ENCODE measurements at regions of chr5 and their contacts with region 1.

Region 1: DNA sequence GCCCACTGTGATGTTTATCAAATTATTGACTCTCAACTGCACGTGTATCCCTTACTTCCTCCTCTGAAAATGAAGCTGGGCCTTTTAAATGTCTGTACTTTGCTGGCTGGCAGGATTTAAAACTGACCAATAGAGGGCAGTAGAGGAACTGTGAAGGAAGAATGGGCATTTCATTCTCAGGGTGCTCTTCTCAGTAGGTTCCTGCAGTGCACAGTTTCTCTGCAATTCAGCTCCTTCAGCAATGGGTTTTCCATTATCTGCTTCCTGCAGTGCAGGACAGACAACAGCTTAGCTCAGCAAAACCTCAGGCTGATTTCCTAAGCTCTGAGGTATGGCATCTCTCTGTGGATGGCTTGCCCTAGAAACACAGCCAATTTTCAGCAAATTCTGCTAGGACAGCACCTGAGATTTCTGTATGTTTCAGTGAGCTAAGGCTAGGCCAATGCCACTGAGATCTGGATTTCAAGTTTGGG is 298.4 kb upstream of the PRDM9 start:
- DNase-seq: peak; percentile 39
- ATAC-seq: peak; percentile 81
- H3K4me3 ChIP-seq: no peak overlapping the region
- H3K27ac ChIP-seq: no peak overlapping the region
- H3K4me1 ChIP-seq: no peaks in the 10 kb centered on the region
- H3K27me3 ChIP-seq: no peaks in the 10 kb centered on the region
- CTCF ChIP-seq: peak; percentile 71
- EP300 ChIP-seq: no peak
- POLR2A ChIP-seq: no peak
- RAD21 ChIP-seq: no peak

Region 2: DNA sequence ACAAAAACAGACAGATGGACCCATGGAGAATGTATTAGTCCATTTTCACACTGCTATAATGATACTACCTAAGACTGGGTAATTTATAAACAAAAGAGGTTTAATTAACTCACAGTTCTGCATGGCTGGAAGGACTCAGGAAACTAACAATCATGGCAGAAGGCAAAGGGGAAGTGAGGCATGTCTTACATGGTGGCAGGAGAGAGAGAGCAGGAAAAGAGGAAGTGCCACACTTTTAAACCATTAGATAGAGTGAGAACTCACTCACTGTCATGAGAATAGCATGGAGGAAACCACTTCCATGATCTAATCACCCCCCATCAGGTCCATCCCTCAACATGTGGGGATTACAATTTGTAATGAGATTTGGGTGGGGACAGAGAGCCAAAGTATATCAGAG is 1164.8 kb before region 1 on chr5:
- CTCF ChIA-PET with region 1: no interaction called
- POLR2A ChIA-PET with region 1: no interaction called
- in situ Hi-C with region 1: no loop called
- intact Hi-C with region 1: no loop called
- DNase-seq: no peak
- ATAC-seq: no peak
- H3K4me3 ChIP-seq: no peak overlapping the region
- H3K27ac ChIP-seq: no peak overlapping the region
- H3K4me1 ChIP-seq: no peaks in the 10 kb centered on the region
- H3K27me3 ChIP-seq: no peaks in the 10 kb centered on the region
- CTCF ChIP-seq: no peak
- EP300 ChIP-seq: no peak
- POLR2A ChIP-seq: no peak
- RAD21 ChIP-seq: no peak

Region 3: GRCh38 chr5:23164971-23165370 is 44.0 kb before region 1 on chr5:
- CTCF ChIA-PET with region 1: no interaction called
- POLR2A ChIA-PET with region 1: no interaction called
- in situ Hi-C with region 1: no loop called
- intact Hi-C with region 1: no loop called
- DNase-seq: no peak
- ATAC-seq: no peak
- H3K4me3 ChIP-seq: no peak overlapping the region
- H3K27ac ChIP-seq: no peak overlapping the region
- H3K4me1 ChIP-seq: no peaks in the 10 kb centered on the region
- H3K27me3 ChIP-seq: no peaks in the 10 kb centered on the region
- CTCF ChIP-seq: no peak
- EP300 ChIP-seq: no peak
- POLR2A ChIP-seq: no peak
- RAD21 ChIP-seq: no peak

Region 4: DNA sequence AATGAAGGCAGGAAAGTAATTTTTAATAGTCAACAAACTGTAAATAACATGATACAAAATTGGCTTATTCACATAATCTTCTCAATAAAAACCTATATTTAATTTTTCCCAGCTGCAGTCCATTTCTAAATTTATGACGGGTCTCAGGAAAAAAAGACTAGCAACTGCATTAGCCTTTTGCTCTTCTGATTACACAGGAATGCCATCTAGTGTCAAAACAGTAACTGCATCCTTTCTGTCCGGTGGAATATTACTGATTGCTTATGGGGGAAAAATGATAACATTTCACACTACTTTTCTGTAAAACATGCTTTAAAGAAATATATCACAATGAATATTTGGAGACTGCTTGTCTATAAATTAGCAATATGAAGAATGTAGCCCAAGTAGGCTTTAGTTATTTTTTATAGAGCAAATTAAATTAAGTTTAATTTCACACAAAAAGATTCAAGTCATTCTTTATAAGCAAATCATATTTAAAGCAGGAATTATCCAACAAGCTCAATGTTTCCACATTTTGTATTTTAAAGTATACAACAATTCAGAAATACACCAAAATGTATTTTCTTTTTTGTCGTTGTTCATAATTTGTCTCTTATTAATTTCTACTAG is 901.1 kb after region 1 on chr5:
- CTCF ChIA-PET with region 1: no interaction called
- POLR2A ChIA-PET with region 1: no interaction called
- in situ Hi-C with region 1: no loop called
- intact Hi-C with region 1: loop called (anchors 5 kb)
- DNase-seq: peak; percentile 2
- ATAC-seq: no peak
- H3K4me3 ChIP-seq: no peak overlapping the region
- H3K27ac ChIP-seq: no peak overlapping the region
- H3K4me1 ChIP-seq: no peaks in the 10 kb centered on the region
- H3K27me3 ChIP-seq: no peaks in the 10 kb centered on the region
- CTCF ChIP-seq: peak; percentile 33
- EP300 ChIP-seq: no peak
- POLR2A ChIP-seq: no peak
- RAD21 ChIP-seq: no peak

Measured in HepG2 (cell line).